ENCODE measurements at regions of chr13 and their contacts with region 1.

Region 1: GRCh38 chr13:22801402-22802003 is 379.3 kb upstream of the SGCG start:
- DNase-seq: no peak

Region 2: GRCh38 chr13:21638319-21639282 is 1162.9 kb before region 1 on chr13:
- intact Hi-C with region 1: loop called (anchors 2 kb)
- DNase-seq: no peak

Region 3: GRCh38 chr13:23020223-23020843 is 218.8 kb after region 1 on chr13:
- intact Hi-C with region 1: loop called (anchors 2 kb)
- DNase-seq: peak in 5 of 10 donors; percentile 8 to 42 (median 25)

Region 4: DNA sequence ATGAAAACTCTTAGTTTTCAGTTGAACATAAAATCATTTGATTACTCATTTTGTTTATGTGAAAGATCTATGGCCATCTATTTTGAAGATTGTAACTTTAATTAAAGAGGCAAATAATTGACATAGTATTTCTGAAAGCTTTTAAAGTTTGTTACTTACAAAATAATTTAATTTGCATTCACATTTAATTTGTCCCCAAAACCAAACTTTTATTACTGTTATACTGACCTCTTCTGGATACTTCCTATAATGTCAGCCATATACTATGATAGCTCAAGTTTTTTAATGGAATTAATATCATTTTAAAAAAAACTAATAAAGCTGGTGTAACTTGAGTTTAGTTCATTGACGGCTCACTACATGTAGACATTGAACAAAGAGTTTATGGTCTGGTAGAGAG is 374.4 kb after region 1 on chr13:
- intact Hi-C with region 1: loop called (anchors 10 kb)
- DNase-seq: no peak

Region 5: GRCh38 chr13:23319883-23320224 is 518.4 kb after region 1 on chr13:
- intact Hi-C with region 1: loop called (anchors 1 kb)
- DNase-seq: no peak

Measured in posterior cingulate gyrus (tissue), 11 donors.